GM10248 (cell line): ENCODE measurements at regions of chr20 and their contacts with region 1.

Region 1: DNA sequence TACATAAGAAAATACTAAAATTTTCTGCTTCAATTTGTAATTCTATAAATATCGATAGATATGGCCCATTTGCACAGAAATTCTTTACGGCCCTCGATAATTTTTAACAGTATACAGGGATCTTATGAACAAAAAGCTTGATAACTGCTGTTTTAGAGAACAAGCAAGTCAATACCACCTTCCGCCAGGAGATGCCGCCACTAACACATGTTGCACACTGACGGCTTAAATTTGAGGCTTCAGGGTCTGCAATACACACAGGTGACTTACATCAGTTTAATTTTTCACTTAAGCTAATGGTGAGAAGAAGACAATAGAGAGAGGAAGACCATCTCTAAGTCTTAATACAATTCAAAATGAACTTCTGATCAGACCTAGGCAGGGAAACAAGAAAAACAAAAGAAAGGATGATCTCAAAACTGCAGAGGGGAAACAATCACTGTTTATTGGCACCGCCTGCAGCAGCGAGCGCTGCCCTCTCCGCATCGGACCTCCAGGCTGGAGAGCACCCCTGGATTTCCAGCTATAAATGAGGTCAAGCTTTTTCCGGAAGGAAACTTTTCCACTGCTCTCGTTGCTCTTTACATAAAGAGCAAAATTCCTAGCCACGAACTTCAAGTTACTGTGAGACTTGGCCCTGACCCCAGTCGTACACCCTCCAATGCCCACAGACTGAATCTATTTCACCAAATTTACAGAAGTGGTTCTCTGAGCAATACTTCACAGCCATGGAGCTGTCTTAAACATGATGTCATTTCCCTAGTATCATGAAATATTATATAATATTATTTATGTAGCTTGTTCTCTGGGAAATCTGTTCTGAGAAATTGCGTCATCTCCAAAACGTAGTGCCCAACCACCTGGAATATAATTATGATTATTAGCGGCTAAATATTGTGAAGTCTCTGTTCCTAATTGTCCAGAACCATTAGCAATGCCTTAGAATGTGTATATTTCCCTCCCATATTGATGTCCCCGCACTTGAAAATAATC is 54.1 kb downstream of the OTOR start:
- DNase-seq: peak; percentile 45
- CTCF ChIP-seq: peak; percentile 74

Region 2: DNA sequence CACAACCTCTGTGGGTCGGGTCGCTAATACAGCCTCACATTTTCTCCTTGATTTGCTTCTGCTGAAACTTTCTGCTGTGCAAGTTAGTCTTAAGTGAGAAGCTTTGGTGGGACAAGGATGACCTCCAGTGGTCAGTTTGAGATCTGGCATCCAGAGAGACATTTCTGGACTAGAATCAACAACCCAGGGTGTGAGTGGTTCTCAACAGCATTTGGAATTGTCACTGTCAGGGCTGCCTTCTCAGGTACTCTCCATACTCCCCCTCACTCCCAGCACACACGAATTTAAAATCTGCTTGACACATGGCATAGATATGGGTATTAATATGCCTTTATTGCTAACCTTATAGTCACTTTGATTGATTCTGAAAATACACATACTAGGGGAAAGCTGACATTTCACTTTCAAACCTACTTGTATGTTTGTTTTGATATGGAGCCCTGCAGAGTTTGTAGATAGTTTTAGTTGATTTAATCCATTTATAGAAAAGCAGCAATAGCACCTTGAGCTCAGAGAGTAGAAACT is 40.8 kb before region 1 on chr20:
- CTCF ChIA-PET with region 1: interaction called, 12 read pairs
- POLR2A ChIA-PET with region 1: no interaction called
- DNase-seq: peak; percentile 45
- CTCF ChIP-seq: peak; percentile 78

Region 3: GRCh38 chr20:16816192-16816591 is 14.0 kb after region 1 on chr20:
- CTCF ChIA-PET with region 1: interaction called, 97 read pairs
- POLR2A ChIA-PET with region 1: no interaction called
- DNase-seq: no peak
- CTCF ChIP-seq: no peak

Region 4: GRCh38 chr20:16821211-16822089 is 19.2 kb after region 1 on chr20:
- CTCF ChIA-PET with region 1: interaction called, 97 read pairs
- POLR2A ChIA-PET with region 1: no interaction called
- DNase-seq: peak; percentile 38
- CTCF ChIP-seq: peak; percentile 81

Region 5: GRCh38 chr20:17431621-17432364 is 629.6 kb after region 1 on chr20:
- CTCF ChIA-PET with region 1: interaction called, 217 read pairs
- POLR2A ChIA-PET with region 1: no interaction called
- DNase-seq: peak; percentile 71
- CTCF ChIP-seq: peak; percentile 78